Endothelial cell of umbilical vein (primary cell): ENCODE measurements at regions of chr18 and their contacts with region 1.

Region 1: GRCh38 chr18:13813271-13813849 is 10.6 kb upstream of the MC5R start:
- DNase-seq: peak; percentile 74
- H3K4me3 ChIP-seq: no peak overlapping the region
- H3K27ac ChIP-seq: no peak overlapping the region
- H3K4me1 ChIP-seq: no peaks in the 10 kb centered on the region
- H3K27me3 ChIP-seq: no peaks in the 10 kb centered on the region
- CTCF ChIP-seq: peak; percentile 76 to 80
- POLR2A ChIP-seq: no peak

Region 2: DNA sequence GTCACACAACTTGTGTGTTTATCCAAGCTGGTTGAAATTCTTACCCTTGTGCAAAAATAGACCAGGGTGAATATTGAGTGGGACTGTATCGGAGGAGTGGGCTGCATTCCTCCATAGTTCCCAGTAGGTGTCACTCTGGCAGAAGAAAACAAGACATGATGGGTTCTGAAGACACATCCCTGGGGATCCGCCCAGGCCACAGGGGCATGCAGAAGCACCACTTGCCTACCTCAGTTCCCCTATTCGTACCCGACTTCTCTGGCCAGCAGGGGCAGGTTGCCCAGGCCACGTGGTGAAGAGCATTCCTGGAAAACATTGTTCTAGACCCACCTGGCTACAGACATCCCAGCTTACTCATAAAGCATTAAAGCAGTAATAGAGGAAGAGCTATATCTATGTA is 255.2 kb before region 1 on chr18:
- CTCF ChIA-PET with region 1: interaction called, 23 read pairs
- POLR2A ChIA-PET with region 1: no interaction called
- dilution Hi-C with region 1: no loop called
- intact Hi-C with region 1: no loop called
- DNase-seq: peak; percentile 40
- H3K4me3 ChIP-seq: no peak overlapping the region
- H3K27ac ChIP-seq: no peak overlapping the region
- H3K4me1 ChIP-seq: no peaks in the 10 kb centered on the region
- H3K27me3 ChIP-seq: peaks cover 6 to 23% of the 10 kb centered on the region in 2 experiments
- CTCF ChIP-seq: peak; percentile 47 to 62
- POLR2A ChIP-seq: no peak

Region 3: GRCh38 chr18:13823707-13824395 is 10.5 kb after region 1 on chr18 and contains the start of gene MC5R:
- CTCF ChIA-PET with region 1: interaction called, 16 read pairs
- POLR2A ChIA-PET with region 1: no interaction called
- dilution Hi-C with region 1: no loop called
- intact Hi-C with region 1: no loop called
- DNase-seq: peak; percentile 53
- H3K4me3 ChIP-seq: peak within 1 kb of the TSS in 1 of 3 experiments; percentile 18
- H3K27ac ChIP-seq: no peak within 1 kb of the TSS
- H3K4me1 ChIP-seq: no peaks in the 10 kb centered on the region
- H3K27me3 ChIP-seq: peaks cover 4 to 5% of the 10 kb centered on the region in 2 experiments
- CTCF ChIP-seq: peak; percentile 89 to 95
- POLR2A ChIP-seq: no peak
- total RNA-seq, gene MC5R: not detected in 2 replicates